ENCODE measurements at regions of chr11 and their contacts with region 1.

Region 1: GRCh38 chr11:82900277-82901164 is at the start of gene PRCP:
- DNase-seq: peak; percentile 97 to 99 (median 97)
- ATAC-seq: peak; percentile 91 to 96 (median 92)
- H3K4me3 ChIP-seq: peak within 1 kb of the TSS; percentile 63 to 82 (median 80)
- H3K27ac ChIP-seq: peak within 1 kb of the TSS; percentile 78 to 89 (median 86)
- H3K4me1 ChIP-seq: peaks cover 0 to 19% (median 4%) of the 10 kb centered on the region in 4 donors
- H3K27me3 ChIP-seq: no peaks in the 10 kb centered on the region
- CTCF ChIP-seq: peak in 1 of 4 donors; percentile 17
- POLR2A ChIP-seq: peak; percentile 93
- total RNA-seq, gene PRCP: 35.4 to 84.9 (median 49.4) TPM

Region 2: GRCh38 chr11:83071567-83072349 is 171.2 kb after region 1 on chr11 and contains the start of gene RAB30:
- intact Hi-C with region 1: loop called in 1 of 2 experiments (anchors 10 kb)
- DNase-seq: peak; percentile 94 to 98 (median 96)
- ATAC-seq: peak; percentile 95 to 99 (median 98)
- H3K4me3 ChIP-seq: peak within 1 kb of the TSS; percentile 76 to 84 (median 79)
- H3K27ac ChIP-seq: peak within 1 kb of the TSS; percentile 93 to 96 (median 94)
- H3K4me1 ChIP-seq: peaks cover 0 to 34% (median 7%) of the 10 kb centered on the region in 4 donors
- H3K27me3 ChIP-seq: no peaks in the 10 kb centered on the region
- CTCF ChIP-seq: no peak
- POLR2A ChIP-seq: peak; percentile 96
- total RNA-seq, gene RAB30: 4.1 to 9.6 (median 6.7) TPM